MCF 10A (cell line): ENCODE measurements at regions of chrX and their contacts with region 1.

Region 1: GRCh38 chrX:38754102-38754790 is 47.0 kb upstream of the MID1IP1 start:
- DNase-seq: peak; percentile 58
- H3K4me3 Mint-ChIP-seq: no peak overlapping the region
- H3K27ac Mint-ChIP-seq: no peak overlapping the region
- H3K4me1 Mint-ChIP-seq: no peaks in the 10 kb centered on the region
- H3K27me3 Mint-ChIP-seq: peaks cover 73% of the 10 kb centered on the region
- CTCF ChIP-seq: peak; percentile 68

Region 2: DNA sequence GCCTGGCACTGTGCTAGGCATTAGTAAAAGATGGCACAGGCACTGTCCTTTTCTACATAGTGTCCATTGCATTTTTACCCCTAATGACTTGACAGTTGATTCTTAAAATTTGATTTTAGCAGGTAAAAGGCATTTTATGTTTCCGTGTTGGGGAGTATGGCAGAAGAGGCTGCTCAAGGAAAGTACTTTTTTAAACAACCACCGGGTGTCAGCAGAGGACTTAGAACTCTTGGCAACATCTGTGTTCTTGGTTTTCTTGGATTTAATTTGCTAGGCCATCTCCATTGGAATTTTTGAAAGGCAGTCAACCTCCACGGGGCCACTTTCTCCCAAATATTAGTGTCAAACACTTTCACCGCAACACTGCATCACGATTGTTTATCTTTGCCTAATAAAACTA is 90.0 kb before region 1 on chrX:
- CTCF ChIA-PET with region 1: interaction called, 30 read pairs
- POLR2A ChIA-PET with region 1: no interaction called
- intact Hi-C with region 1: loop called (anchors 2 kb)
- DNase-seq: peak; percentile 64
- H3K4me3 Mint-ChIP-seq: no peak overlapping the region
- H3K27ac Mint-ChIP-seq: no peak overlapping the region
- H3K4me1 Mint-ChIP-seq: no peaks in the 10 kb centered on the region
- H3K27me3 Mint-ChIP-seq: peaks cover 37% of the 10 kb centered on the region
- CTCF ChIP-seq: peak; percentile 62

Region 3: GRCh38 chrX:38845426-38845825 is 91.2 kb after region 1 on chrX:
- CTCF ChIA-PET with region 1: no interaction called
- POLR2A ChIA-PET with region 1: no interaction called
- intact Hi-C with region 1: no loop called
- DNase-seq: no peak
- H3K4me3 Mint-ChIP-seq: no peak overlapping the region
- H3K27ac Mint-ChIP-seq: no peak overlapping the region
- H3K4me1 Mint-ChIP-seq: no peaks in the 10 kb centered on the region
- H3K27me3 Mint-ChIP-seq: peaks cover 42% of the 10 kb centered on the region
- CTCF ChIP-seq: no peak

Region 4: DNA sequence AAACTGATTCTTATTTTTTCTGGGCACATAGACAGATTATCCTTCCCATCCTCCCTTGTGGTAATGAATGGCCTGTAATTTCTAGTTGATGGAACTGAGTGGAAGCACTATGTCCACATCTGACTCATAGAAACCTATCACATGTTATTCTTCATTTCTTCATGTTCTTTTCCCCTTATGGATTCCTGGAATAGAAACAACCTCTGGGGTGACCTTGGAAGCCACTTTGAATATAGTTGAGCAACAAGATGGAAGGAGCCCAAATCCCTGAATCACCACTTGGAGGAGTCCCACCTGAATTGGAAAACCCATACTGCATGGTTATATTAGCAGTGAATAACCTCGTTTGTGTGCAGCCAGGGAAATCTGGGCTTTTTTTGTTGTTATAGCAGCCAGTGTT is 184.8 kb after region 1 on chrX:
- CTCF ChIA-PET with region 1: no interaction called
- POLR2A ChIA-PET with region 1: no interaction called
- intact Hi-C with region 1: no loop called
- DNase-seq: peak; percentile 74
- H3K4me3 Mint-ChIP-seq: no peak overlapping the region
- H3K27ac Mint-ChIP-seq: no peak overlapping the region
- H3K4me1 Mint-ChIP-seq: peaks cover 8% of the 10 kb centered on the region
- H3K27me3 Mint-ChIP-seq: no peaks in the 10 kb centered on the region
- CTCF ChIP-seq: no peak

Region 5: GRCh38 chrX:38985375-38985774 is 231.1 kb after region 1 on chrX:
- CTCF ChIA-PET with region 1: no interaction called
- POLR2A ChIA-PET with region 1: no interaction called
- intact Hi-C with region 1: loop called (anchors 5 kb)
- DNase-seq: peak; percentile 18
- H3K4me3 Mint-ChIP-seq: no peak overlapping the region
- H3K27ac Mint-ChIP-seq: no peak overlapping the region
- H3K4me1 Mint-ChIP-seq: no peaks in the 10 kb centered on the region
- H3K27me3 Mint-ChIP-seq: peaks cover 55% of the 10 kb centered on the region
- CTCF ChIP-seq: no peak

Region 6: GRCh38 chrX:39242187-39242586 is 487.9 kb after region 1 on chrX:
- CTCF ChIA-PET with region 1: interaction called, 6 read pairs
- POLR2A ChIA-PET with region 1: no interaction called
- intact Hi-C with region 1: loop called (anchors 1 kb)
- DNase-seq: peak; percentile 51
- H3K4me3 Mint-ChIP-seq: no peak overlapping the region
- H3K27ac Mint-ChIP-seq: no peak overlapping the region
- H3K4me1 Mint-ChIP-seq: no peaks in the 10 kb centered on the region
- H3K27me3 Mint-ChIP-seq: peaks cover 37% of the 10 kb centered on the region
- CTCF ChIP-seq: peak; percentile 37

Region 7: DNA sequence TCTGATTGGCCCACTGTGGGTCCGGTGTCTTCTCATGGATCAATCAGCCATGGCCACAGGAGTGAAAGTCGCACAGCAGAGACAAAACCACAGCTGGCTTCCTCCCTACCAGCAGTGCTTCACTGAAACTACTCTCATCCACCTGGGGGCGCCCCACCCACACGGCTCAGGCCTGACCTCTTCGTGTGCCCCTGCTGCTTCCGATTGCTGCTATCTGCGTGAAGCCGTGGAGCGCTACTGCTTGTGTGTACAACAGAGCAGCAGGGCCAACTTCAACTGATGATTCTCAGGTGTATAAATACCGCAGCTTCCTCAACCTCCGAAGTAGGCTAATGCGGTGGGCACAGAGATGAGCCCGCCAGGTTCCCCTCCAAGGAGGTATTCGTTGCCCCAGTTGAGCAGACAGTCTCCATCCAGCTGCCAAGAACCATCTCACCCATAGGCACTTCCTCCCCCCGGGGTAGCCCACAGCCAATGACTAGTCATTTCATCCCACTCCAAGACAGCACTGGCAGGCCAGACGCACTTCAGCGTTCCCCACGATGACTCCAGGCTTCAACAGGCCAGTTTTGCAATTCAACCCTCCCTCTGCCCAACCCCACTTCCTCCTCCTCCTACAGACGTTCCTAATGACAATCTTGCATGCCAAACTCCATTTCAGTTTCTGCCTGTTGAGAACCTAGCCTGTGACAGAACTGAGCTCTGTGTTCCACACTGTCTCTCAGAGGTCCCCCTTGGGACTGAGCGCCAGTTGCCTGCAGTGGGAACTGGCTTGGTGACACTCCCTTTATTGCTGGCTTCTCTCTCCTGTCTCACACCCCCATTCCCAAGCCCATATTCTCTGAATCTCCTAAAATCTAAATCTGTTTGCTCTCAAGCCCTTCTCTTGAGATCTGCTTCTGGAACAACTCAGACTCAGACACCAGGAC is 1785.2 kb after region 1 on chrX:
- CTCF ChIA-PET with region 1: no interaction called
- POLR2A ChIA-PET with region 1: no interaction called
- intact Hi-C with region 1: loop called (anchors 10 kb)
- DNase-seq: peak; percentile 27
- H3K4me3 Mint-ChIP-seq: no peak overlapping the region
- H3K27ac Mint-ChIP-seq: no peak overlapping the region
- H3K4me1 Mint-ChIP-seq: peaks cover 7% of the 10 kb centered on the region
- H3K27me3 Mint-ChIP-seq: peaks cover 86% of the 10 kb centered on the region
- CTCF ChIP-seq: no peak